OCI-LY7 (cell line): ENCODE measurements at regions of chr22 and their contacts with region 1.

Region 1: DNA sequence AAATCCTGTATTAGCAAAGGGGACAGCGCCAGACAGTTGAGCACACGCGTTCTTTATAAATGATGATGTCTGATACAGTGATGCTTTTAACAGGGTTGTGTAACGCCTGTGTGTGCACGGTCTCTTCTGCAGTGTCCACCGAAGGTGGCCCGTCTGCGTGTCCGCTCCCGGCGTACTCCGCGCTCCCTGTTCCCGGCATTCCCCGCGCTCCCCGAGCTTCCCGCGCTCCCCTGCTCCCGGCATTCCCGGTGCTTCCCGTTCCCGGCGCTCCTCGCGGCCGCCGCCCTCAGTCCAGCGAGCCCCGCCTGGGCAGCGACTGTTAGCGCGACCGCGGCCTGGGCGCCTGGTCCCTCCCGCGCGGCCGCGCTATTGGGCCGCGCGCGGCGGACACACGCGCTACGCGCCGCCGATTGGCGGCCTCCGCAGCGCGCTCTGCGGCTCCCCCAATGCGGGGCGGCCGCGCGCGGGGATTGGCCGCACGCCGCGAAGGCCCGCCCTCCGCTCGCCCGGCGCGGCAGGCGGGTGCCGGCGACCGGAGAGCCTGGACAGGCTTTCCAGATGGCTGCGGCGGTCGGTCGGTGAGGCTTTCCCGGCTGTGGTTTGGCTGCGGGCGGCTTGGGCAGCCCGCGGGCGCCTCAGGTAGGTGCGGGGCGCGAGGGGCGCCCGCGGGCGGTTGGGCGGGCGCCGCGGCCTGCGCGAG is at the start of gene DGCR8:
- DNase-seq: peak; percentile 91
- H3K4me3 ChIP-seq: peak within 1 kb of the TSS; percentile 99
- H3K27ac ChIP-seq: peak within 1 kb of the TSS; percentile 70
- H3K4me1 ChIP-seq: peaks cover 40% of the 10 kb centered on the region
- CTCF ChIP-seq: no peak
- total RNA-seq, gene DGCR8: 49.5 and 53.4 TPM in 2 replicates

Region 2: GRCh38 chr22:19962233-19962908 is 117.5 kb before region 1 on chr22:
- CTCF ChIA-PET with region 1: no interaction called
- POLR2A ChIA-PET with region 1: no interaction called
- intact Hi-C with region 1: loop called (anchors 5 kb)
- DNase-seq: peak; percentile 90
- H3K4me3 ChIP-seq: no peak overlapping the region
- H3K27ac ChIP-seq: no peak overlapping the region
- H3K4me1 ChIP-seq: peaks cover 4% of the 10 kb centered on the region
- CTCF ChIP-seq: peak; percentile 80

Region 3: GRCh38 chr22:20020533-20021195 is 59.2 kb before region 1 on chr22 and contains the start of gene TANGO2:
- CTCF ChIA-PET with region 1: no interaction called
- POLR2A ChIA-PET with region 1: interaction called, 3 read pairs
- intact Hi-C with region 1: loop called (anchors 2 kb)
- DNase-seq: peak; percentile 96
- H3K4me3 ChIP-seq: peak within 1 kb of the TSS; percentile 83
- H3K27ac ChIP-seq: no peak within 1 kb of the TSS
- H3K4me1 ChIP-seq: peaks cover 32% of the 10 kb centered on the region
- CTCF ChIP-seq: no peak
- total RNA-seq, gene TANGO2: 12.3 and 18.3 TPM in 2 replicates

Region 4: DNA sequence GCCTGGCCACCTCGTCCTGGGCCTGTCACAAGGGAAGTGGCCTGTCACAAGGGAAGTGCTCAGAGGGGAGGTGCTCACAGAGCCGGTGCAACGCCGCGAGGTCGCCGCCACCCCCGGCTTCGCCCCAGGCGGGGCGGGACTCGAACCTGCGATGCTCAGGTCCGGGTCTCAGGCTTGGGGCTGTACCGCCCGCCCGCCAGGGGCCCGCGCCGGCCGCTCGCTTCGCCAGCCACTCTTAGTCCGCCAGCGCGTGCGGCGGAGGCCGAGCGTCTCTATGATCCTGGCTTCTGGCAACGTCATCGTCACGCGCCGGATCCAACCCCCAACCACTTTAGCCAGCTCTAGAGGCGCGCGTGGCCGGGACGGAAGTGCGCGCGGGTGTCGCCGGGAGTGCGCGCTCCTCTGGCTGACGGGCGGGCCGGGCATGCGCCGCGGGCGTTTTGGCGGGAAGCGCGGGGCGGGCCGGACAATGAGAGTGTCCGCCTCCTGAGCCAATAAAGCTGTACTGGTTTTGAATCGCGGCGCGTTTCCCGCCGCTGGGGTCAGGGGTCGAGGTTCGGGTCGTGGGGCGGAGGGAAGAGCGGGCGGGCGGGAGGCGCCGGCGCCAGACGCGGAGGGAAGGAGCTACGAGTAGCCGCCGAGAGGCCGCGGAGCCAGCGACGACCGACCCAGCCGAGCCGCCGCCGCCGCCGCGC is 37.2 kb after region 1 on chr22 and contains the start of gene TRMT2A:
- CTCF ChIA-PET with region 1: no interaction called
- POLR2A ChIA-PET with region 1: no interaction called
- intact Hi-C with region 1: loop called (anchors 1 kb)
- DNase-seq: peak; percentile 99
- H3K4me3 ChIP-seq: peak within 1 kb of the TSS; percentile 98
- H3K27ac ChIP-seq: peak within 1 kb of the TSS; percentile 74
- H3K4me1 ChIP-seq: peaks cover 31% of the 10 kb centered on the region
- CTCF ChIP-seq: peak; percentile 54
- total RNA-seq, gene TRMT2A: 118 and 126 TPM in 2 replicates